Caco-2 (cell line): ENCODE measurements at regions of chr4 and their contacts with region 1.

Region 1: DNA sequence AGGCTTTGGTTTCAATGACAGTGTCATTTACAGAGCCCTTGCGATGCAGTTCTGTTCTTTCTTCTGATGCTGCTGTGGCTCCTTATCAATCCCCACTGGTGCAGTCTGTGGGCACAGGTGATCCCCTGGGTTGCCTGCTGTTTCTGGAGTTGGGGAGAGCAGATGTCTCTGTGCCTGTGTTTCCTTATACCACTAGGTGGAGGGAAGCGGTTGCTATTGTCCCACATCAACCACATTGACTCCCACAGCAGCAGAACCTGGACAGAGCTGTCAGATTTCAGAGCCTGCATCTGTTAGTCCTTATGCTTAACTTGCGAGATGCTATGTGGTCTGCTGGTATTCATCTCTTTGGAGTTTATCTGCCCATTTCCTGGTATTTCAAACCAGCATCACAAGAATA is 57.7 kb downstream of the NEIL3 start:
- DNase-seq: peak in 1 of 2 experiments; percentile 24
- H3K4me3 ChIP-seq: no peak overlapping the region
- H3K4me3 Mint-ChIP-seq: no peak overlapping the region
- H3K27ac Mint-ChIP-seq: no peak overlapping the region
- H3K4me1 ChIP-seq: no peaks in the 10 kb centered on the region
- H3K4me1 Mint-ChIP-seq: no peaks in the 10 kb centered on the region
- H3K27me3 ChIP-seq: no peaks in the 10 kb centered on the region
- H3K27me3 Mint-ChIP-seq: no peaks in the 10 kb centered on the region
- CTCF ChIP-seq: peak in 1 of 2 experiments; percentile 47

Region 2: GRCh38 chr4:177546745-177547144 is 179.4 kb after region 1 on chr4:
- CTCF ChIA-PET with region 1: no interaction called
- POLR2A ChIA-PET with region 1: no interaction called
- intact Hi-C with region 1: loop called (anchors 5 kb)
- DNase-seq: no peak
- H3K4me3 ChIP-seq: no peak overlapping the region
- H3K4me3 Mint-ChIP-seq: no peak overlapping the region
- H3K27ac Mint-ChIP-seq: no peak overlapping the region
- H3K4me1 ChIP-seq: no peaks in the 10 kb centered on the region
- H3K4me1 Mint-ChIP-seq: no peaks in the 10 kb centered on the region
- H3K27me3 ChIP-seq: no peaks in the 10 kb centered on the region
- H3K27me3 Mint-ChIP-seq: peaks cover 2% of the 10 kb centered on the region
- CTCF ChIP-seq: no peak